Esophagus muscularis mucosa (tissue), 4 donors: ENCODE measurements at regions of chr18 and their contacts with region 1.

Region 1: GRCh38 chr18:21740724-21741510 is at the start of gene MIB1:
- DNase-seq: peak; percentile 100
- H3K4me3 ChIP-seq: peak within 1 kb of the TSS; percentile 72 to 100 (median 98)
- H3K27ac ChIP-seq: peak within 1 kb of the TSS; percentile 96 to 99 (median 98)
- H3K4me1 ChIP-seq: peaks cover 12 to 43% (median 28%) of the 10 kb centered on the region in 4 donors
- H3K27me3 ChIP-seq: no peaks in the 10 kb centered on the region
- CTCF ChIP-seq: no peak
- EP300 ChIP-seq: no peak
- POLR2A ChIP-seq: peak; percentile 35
- total RNA-seq, gene MIB1: 36.0 to 55.3 (median 40.8) TPM

Region 2: GRCh38 chr18:21600526-21601410 is 140.1 kb before region 1 on chr18 and contains the start of gene ESCO1:
- intact Hi-C with region 1: loop called (anchors 5 kb)
- DNase-seq: peak; percentile 98
- H3K4me3 ChIP-seq: peak within 1 kb of the TSS; percentile 71 to 94 (median 76)
- H3K27ac ChIP-seq: peak within 1 kb of the TSS; percentile 93 to 97 (median 95)
- H3K4me1 ChIP-seq: peaks cover 15 to 38% (median 25%) of the 10 kb centered on the region in 4 donors
- H3K27me3 ChIP-seq: no peaks in the 10 kb centered on the region
- CTCF ChIP-seq: peak; percentile 96 to 98 (median 96)
- EP300 ChIP-seq: no peak
- POLR2A ChIP-seq: peak; percentile 69
- total RNA-seq, gene ESCO1: 12.6 to 19.5 (median 15.0) TPM

Region 3: DNA sequence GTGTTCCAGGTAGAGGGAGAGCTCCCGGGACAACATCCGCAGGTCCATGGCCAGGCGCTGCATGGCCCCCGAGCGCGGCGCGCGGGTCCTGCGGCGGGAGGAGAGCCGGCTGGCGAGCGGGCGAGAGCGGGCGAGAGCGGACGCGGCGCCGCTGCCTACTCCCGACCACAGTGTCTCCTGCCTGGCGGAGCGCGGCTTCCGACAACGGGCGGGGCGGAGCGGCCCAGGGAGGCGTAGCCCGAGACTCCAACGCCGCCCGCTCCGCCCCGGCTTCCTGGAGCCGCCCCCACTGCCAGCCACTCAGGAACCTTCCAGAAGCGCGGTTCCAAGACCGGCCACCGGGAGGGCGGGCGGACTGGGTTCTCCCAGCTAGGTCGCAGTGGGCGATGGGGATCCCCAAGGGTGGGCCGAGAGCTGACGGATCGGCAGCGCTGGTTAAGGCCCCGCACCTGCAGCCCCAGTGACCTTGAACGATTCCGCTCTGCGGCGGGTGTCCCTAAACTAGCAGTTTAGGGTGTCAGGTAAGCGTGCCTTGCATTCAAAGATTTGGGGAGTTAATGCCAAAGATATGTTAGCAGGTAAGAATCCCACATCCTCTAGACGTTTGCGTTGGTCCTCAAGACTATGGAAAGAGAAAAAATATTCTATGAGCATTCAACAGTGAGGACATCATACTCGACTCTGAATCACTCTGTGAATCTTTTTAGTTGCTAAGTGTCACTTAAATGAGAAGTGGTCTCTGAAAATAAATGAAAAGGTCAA is 36.1 kb before region 1 on chr18 and contains the start of gene ABHD3:
- intact Hi-C with region 1: loop called (anchors 2 kb)
- DNase-seq: peak; percentile 95
- H3K4me3 ChIP-seq: peak within 1 kb of the TSS; percentile 77 to 90 (median 84)
- H3K27ac ChIP-seq: peak within 1 kb of the TSS; percentile 91 to 97 (median 96)
- H3K4me1 ChIP-seq: peaks cover 16 to 23% (median 20%) of the 10 kb centered on the region in 4 donors
- H3K27me3 ChIP-seq: no peaks in the 10 kb centered on the region
- CTCF ChIP-seq: peak; percentile 28 to 73 (median 41)
- EP300 ChIP-seq: no peak
- POLR2A ChIP-seq: peak; percentile 56
- total RNA-seq, gene ABHD3: 5.1 to 8.3 (median 7.0) TPM

Region 4: DNA sequence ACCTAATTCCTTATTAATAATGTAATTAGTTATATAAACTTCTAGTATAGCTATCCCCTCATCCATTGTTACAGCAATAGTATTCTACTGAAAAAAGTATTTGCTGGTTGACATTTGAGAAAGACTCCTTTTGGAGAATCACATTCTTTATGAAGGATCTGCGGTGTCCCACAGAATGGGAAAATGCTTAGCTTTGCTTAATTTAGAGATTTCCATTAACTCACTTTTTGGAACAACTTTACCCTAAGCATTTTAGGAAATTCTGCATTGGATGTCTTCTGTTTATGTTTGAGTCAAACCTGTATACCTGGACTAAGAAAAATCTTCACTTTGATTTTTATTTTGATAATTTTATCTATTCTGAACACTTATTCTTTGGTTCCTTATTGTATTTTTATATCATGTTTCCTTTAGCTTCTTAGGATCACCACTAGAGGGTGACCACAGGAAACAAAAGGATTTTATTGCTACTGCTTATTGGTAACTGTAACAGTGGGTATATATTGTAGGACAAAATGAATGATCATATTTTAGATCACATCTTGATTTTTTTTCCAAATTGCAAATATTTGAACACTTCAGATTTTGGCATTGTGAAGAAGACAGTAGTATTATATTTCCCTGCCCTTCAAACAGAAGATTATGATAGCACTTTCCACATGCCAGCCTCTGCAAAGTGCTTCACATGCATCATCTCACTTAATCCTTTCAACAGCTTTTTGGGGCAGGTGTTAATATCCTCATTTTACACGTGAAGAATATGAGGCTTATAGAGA is 79.3 kb after region 1 on chr18:
- intact Hi-C with region 1: loop called (anchors 10 kb)
- DNase-seq: no peak
- H3K4me3 ChIP-seq: no peak overlapping the region
- H3K27ac ChIP-seq: no peak overlapping the region
- H3K4me1 ChIP-seq: no peaks in the 10 kb centered on the region
- H3K27me3 ChIP-seq: no peaks in the 10 kb centered on the region
- CTCF ChIP-seq: peak; percentile 49 to 67 (median 55)
- EP300 ChIP-seq: no peak
- POLR2A ChIP-seq: no peak

Region 5: DNA sequence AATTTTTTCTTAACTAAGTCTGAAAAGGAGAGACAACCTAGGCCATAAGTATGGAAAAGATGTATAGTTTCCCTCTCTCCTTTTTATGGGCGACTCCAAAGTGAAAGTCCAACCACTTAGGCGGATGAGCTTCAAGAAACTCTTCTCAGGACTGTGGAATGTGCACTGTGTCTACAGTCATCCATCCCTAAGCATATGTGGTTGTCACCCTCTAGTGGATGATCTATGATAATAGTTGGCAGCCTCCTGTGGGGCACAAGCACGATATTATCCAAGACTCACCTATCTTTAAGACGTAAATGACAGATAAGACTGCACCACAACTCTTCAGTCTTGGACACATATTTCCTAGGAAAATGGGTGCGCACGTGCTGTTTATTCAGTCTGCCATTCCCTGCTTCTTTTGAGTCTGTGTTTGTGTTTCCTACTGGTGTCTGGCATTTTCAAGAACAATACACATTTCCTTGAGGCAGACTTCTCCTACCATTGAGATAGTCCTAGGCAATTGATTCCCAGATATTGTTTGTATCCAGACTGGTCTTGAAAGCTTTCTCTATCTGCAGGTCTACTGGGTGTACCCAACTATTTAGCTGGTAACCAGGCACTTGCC is 822.3 kb after region 1 on chr18:
- intact Hi-C with region 1: no loop called
- DNase-seq: no peak
- H3K4me3 ChIP-seq: no peak overlapping the region
- H3K27ac ChIP-seq: no peak overlapping the region
- H3K4me1 ChIP-seq: peaks cover 5 to 30% (median 28%) of the 10 kb centered on the region in 4 donors
- H3K27me3 ChIP-seq: peaks cover 0 to 8% (median 0%) of the 10 kb centered on the region in 4 donors
- CTCF ChIP-seq: peak; percentile 74
- EP300 ChIP-seq: no peak
- POLR2A ChIP-seq: no peak